PC-3 (cell line): ENCODE measurements at regions of chr3 and their contacts with region 1.

Region 1: GRCh38 chr3:4584456-4585249 is 91.5 kb downstream of the ITPR1 start:
- DNase-seq: no peak
- ATAC-seq: no peak
- H3K4me3 ChIP-seq: peak overlapping the region; percentile 50
- H3K27ac ChIP-seq: no peak overlapping the region
- H3K4me1 ChIP-seq: peaks cover 19% of the 10 kb centered on the region
- H3K27me3 ChIP-seq: no peaks in the 10 kb centered on the region
- CTCF ChIP-seq: no peak

Region 2: GRCh38 chr3:4406746-4407568 is 177.7 kb before region 1 on chr3:
- CTCF ChIA-PET with region 1: no interaction called
- POLR2A ChIA-PET with region 1: no interaction called
- intact Hi-C with region 1: loop called (anchors 5 kb)
- DNase-seq: peak; percentile 76
- ATAC-seq: peak; percentile 86
- H3K4me3 ChIP-seq: no peak overlapping the region; the same call in 1 of the 2 replicates
- H3K27ac ChIP-seq: peak overlapping the region; percentile 91
- H3K4me1 ChIP-seq: peaks cover 53% of the 10 kb centered on the region
- H3K27me3 ChIP-seq: no peaks in the 10 kb centered on the region
- CTCF ChIP-seq: no peak

Region 3: DNA sequence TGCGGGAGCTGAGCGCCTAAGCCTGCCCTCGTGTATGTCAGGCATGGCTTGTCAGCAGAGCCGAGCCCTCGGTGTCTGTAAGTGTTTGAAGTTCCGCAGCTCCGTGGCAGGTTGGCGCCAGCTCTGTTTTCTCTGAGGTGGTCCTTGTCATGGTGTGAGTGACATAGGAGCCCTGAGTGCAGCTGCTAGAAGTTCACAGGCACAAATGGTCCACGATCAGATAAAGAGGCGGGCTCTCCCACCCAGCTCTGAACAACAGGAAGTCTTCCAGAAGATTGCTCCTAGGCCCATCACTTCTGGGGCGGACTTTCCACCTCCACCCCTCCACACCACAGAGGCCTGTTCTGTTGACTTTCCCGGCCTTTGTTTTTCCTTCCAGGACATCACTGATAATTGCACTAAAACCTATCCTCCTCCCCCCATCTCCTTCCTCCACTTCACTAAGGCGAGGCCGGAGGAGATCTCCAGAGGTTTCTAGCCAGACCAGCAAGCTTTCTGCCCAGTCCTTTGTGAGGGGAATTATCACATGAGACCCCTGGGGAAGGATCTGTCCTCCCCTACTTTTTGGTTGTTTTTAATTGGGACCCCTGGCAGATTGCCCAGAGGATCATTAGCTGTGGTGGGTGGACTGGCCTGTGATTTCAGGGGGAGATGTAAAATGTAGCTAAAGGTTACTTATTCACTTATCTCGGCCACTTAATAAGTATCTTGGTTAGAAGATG is 71.6 kb before region 1 on chr3:
- CTCF ChIA-PET with region 1: no interaction called
- POLR2A ChIA-PET with region 1: no interaction called
- intact Hi-C with region 1: no loop called
- DNase-seq: no peak
- ATAC-seq: no peak
- H3K4me3 ChIP-seq: no peak overlapping the region
- H3K27ac ChIP-seq: no peak overlapping the region
- H3K4me1 ChIP-seq: peaks cover 7% of the 10 kb centered on the region
- H3K27me3 ChIP-seq: no peaks in the 10 kb centered on the region
- CTCF ChIP-seq: no peak